Head of caudate nucleus (tissue), 42 donors: ENCODE measurements at regions of chr20 and their contacts with region 1.

Region 1: DNA sequence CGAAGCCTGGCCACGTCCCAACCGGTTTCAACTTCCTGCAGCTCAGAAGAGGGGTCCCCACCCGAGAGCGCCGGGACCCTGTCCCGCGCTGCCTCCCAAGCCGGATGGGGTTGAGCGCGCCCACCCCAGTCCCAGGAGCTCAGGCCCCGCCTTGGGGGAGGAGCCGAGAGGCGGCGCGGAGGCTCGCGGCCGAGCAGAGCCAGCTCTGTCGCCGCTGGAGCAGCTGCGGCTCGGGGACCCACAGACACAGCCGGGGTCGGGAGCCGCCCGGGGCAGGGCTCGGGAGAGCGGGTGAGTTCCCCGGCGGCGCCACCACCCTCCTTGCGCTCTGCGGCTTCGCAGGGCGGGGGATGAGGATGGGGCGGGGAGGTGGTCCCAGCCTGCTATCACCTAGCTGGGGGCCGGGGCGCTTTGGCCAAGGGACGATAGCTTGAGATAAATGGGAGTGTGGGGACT is at the start of gene PPP1R16B:
- DNase-seq: peak; percentile 58 to 94 (median 86)

Region 2: DNA sequence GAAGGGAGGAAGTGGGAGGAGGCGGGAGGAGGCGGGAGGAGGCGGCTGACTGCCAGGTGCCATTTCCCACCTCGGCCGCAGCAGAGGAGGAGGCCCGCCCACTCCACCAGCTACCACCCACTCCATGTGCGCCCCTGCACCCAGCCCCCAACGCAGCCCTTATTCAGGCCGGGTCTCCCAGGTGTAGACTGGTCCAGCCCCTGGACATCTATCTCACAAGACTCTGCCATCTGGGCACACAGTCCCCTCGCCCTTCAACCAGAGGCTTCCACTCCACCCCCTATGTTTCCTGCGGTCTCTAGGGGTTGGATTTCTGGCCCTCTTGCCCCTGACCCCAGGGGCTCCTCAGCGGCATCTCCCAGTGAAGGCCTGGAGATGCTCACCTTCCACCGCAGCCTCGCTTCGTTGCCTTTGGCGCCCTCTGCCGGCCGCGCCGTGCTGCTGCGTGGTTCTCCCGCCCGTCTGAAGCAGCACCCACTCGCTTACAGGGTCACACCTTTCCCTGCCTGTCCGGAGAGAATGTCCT is 88.1 kb after region 1 on chr20:
- intact Hi-C with region 1: loop called (anchors 5 kb)
- DNase-seq: peak; percentile 63 to 94 (median 86)